ENCODE measurements at regions of chr5 and their contacts with region 1.

Region 1: DNA sequence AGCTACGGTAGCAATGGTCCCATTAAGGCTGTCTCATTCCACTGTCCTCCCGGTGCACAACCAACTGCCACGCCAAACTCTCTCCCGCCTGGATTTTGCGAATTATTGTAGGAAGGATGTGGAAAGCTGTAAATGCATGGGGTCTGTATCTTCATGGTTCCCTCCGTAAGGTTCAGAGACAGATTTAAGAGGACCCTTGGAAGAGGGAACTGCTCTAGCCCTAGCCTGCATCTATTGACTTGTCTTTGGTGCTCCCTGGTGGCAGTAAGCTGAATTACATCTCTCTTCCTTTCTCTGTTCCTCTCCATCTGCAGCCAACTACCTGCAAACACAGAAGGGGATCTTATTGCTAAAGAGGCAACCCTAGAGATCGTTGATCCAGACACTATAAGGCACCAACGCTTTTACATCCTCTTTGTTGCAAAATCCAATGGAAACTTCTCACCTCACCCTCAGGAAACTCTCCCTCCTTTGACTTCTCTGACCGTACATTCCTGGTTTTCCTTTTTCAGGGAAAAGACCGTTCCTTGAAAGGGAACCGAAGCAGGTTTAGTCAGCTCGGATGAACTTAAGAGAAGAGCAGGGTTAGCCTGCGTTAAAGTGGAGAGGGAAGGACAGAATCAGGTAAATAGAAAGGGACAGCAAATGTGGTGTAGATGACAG is 11.9 kb downstream of the CAPSL start:
- DNase-seq: peak in 1 of 2 experiments; percentile 69
- H3K4me3 ChIP-seq: no peak overlapping the region
- H3K4me3 Mint-ChIP-seq: no peak overlapping the region
- H3K27ac Mint-ChIP-seq: no peak overlapping the region
- H3K4me1 ChIP-seq: no peaks in the 10 kb centered on the region; the same call in 1 of the 2 replicates
- H3K4me1 Mint-ChIP-seq: peaks cover 7% of the 10 kb centered on the region
- H3K27me3 ChIP-seq: peaks cover 2% of the 10 kb centered on the region; the same call in 1 of the 2 replicates
- H3K27me3 Mint-ChIP-seq: peaks cover 22% of the 10 kb centered on the region
- CTCF ChIP-seq: peak; percentile 78 to 89

Region 2: GRCh38 chr5:35617435-35618303 is 308.9 kb before region 1 on chr5 and contains the start of gene SPEF2:
- CTCF ChIA-PET with region 1: no interaction called
- POLR2A ChIA-PET with region 1: no interaction called
- intact Hi-C with region 1: loop called (anchors 1 kb)
- DNase-seq: peak; percentile 85 to 89
- H3K4me3 ChIP-seq: peak within 1 kb of the TSS; percentile 66
- H3K4me3 Mint-ChIP-seq: peak within 1 kb of the TSS; percentile 82
- H3K27ac Mint-ChIP-seq: peak within 1 kb of the TSS; percentile 74
- H3K4me1 ChIP-seq: no peaks in the 10 kb centered on the region
- H3K4me1 Mint-ChIP-seq: no peaks in the 10 kb centered on the region
- H3K27me3 ChIP-seq: no peaks in the 10 kb centered on the region
- H3K27me3 Mint-ChIP-seq: peaks cover 3% of the 10 kb centered on the region
- CTCF ChIP-seq: peak; percentile 86 to 91
- total RNA-seq, gene SPEF2: 2.1 and 4.0 TPM in 2 replicates

Region 3: DNA sequence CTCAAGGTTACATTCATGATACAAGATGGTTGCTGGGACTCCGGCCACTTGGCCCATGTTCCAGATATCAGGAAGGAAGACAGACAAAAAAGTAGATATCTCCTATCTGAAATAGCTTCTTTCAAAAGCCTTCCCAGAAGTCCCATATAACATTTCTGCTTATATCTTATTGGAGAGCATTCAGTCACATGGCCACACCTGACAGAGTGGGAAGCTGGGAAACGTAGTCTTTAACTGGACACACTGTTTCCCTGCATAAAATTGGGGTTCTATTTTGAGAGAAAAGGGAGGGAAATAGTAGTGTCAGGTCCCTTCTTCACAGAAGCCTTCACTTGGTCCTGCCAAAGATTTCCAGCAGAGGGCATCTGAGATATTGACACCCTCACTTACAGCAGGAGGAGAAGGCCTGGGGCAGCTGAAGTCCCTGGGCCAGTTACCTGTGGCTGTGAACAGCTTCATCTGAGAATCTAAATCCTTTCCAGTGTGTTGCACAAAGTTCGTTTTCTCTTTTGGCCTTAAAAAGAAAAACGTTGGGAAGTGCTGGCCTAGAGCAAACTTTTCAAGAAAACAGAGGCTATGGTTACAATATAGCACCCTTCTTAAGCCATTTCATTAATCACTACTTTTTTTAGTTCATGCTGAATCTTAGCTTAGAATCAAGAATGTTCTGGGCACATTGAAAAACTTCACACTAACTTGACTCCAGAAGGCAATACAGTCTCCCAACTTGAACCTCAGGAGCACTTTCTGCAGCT is 275.3 kb before region 1 on chr5:
- CTCF ChIA-PET with region 1: interaction called, 26 read pairs
- POLR2A ChIA-PET with region 1: no interaction called
- intact Hi-C with region 1: loop called (anchors 1 kb)
- DNase-seq: peak; percentile 45 to 49
- H3K4me3 ChIP-seq: no peak overlapping the region
- H3K4me3 Mint-ChIP-seq: no peak overlapping the region
- H3K27ac Mint-ChIP-seq: no peak overlapping the region
- H3K4me1 ChIP-seq: no peaks in the 10 kb centered on the region
- H3K4me1 Mint-ChIP-seq: no peaks in the 10 kb centered on the region
- H3K27me3 ChIP-seq: no peaks in the 10 kb centered on the region
- H3K27me3 Mint-ChIP-seq: peaks cover 3% of the 10 kb centered on the region
- CTCF ChIP-seq: peak; percentile 39 to 71

Region 4: GRCh38 chr5:35777358-35778087 is 149.0 kb before region 1 on chr5:
- CTCF ChIA-PET with region 1: interaction called, 4 read pairs
- POLR2A ChIA-PET with region 1: no interaction called
- intact Hi-C with region 1: loop called (anchors 1 kb)
- DNase-seq: peak; percentile 67 to 70
- H3K4me3 ChIP-seq: no peak overlapping the region
- H3K4me3 Mint-ChIP-seq: no peak overlapping the region
- H3K27ac Mint-ChIP-seq: no peak overlapping the region
- H3K4me1 ChIP-seq: no peaks in the 10 kb centered on the region
- H3K4me1 Mint-ChIP-seq: no peaks in the 10 kb centered on the region
- H3K27me3 ChIP-seq: no peaks in the 10 kb centered on the region; the same call in none of the 2 replicates
- H3K27me3 Mint-ChIP-seq: peaks cover 6% of the 10 kb centered on the region
- CTCF ChIP-seq: peak; percentile 56 to 69

Region 5: DNA sequence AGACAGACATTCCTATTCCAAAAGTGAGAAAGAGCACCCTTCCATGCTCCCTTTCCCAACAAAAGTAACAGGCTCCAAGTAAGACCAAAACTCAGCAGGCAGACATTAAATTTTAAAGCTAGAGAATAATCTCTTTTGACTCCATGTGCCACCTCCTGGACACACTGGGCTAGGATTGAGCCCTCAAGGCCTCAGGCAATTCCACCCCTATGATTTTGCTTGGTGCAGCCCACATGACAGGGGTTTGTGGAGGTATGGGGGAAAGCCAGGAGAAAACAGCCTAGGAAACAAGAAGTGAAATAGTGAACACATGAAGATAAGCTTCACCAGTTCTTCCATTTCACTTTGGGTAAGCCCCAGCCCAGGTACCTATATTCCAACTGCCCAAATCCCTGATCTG is 16.6 kb after region 1 on chr5:
- CTCF ChIA-PET with region 1: no interaction called
- POLR2A ChIA-PET with region 1: no interaction called
- intact Hi-C with region 1: no loop called
- DNase-seq: no peak
- H3K4me3 ChIP-seq: no peak overlapping the region
- H3K4me3 Mint-ChIP-seq: no peak overlapping the region
- H3K27ac Mint-ChIP-seq: no peak overlapping the region
- H3K4me1 ChIP-seq: no peaks in the 10 kb centered on the region
- H3K4me1 Mint-ChIP-seq: no peaks in the 10 kb centered on the region
- H3K27me3 ChIP-seq: no peaks in the 10 kb centered on the region
- H3K27me3 Mint-ChIP-seq: peaks cover 9% of the 10 kb centered on the region
- CTCF ChIP-seq: no peak

Region 6: DNA sequence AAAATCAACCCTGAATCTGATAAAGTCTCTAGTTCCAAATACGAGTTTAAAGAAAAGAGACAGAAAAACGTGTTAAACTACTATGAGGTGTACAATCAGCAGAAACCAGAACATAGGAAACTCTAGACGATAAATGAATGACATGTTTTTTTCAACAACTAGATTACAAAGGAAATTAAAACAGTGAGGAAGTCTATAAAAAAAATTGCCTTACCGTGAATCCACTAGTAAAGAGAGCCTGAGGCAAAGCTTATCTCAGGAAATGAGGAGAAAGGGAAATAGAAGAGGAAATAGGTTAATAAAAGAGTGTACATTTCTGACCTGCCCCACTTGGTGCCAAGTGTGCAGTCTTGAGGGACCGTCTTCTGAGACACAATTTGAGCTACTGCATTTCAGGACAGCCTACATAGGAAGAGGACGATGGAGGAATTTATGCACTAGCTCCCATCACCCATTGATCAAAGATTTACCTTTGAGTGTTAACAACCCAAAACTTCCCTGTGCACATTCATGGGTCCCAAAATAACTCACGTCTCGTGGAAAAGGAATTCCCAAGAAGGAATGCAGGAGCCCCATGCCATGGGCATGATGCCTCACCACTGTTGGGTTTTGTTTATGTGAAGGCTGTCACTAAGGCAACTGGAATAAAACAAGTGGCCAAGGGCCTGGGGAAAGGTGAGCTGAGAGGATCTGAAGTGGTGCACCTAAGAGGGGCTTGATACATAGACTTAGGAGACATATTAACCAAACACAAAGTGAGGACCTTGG is 626.3 kb after region 1 on chr5:
- CTCF ChIA-PET with region 1: no interaction called
- POLR2A ChIA-PET with region 1: no interaction called
- intact Hi-C with region 1: no loop called
- DNase-seq: peak in 1 of 2 experiments; percentile 22
- H3K4me3 ChIP-seq: no peak overlapping the region
- H3K4me3 Mint-ChIP-seq: no peak overlapping the region
- H3K27ac Mint-ChIP-seq: peak overlapping the region; percentile 22
- H3K4me1 ChIP-seq: no peaks in the 10 kb centered on the region
- H3K4me1 Mint-ChIP-seq: no peaks in the 10 kb centered on the region
- H3K27me3 ChIP-seq: no peaks in the 10 kb centered on the region
- H3K27me3 Mint-ChIP-seq: no peaks in the 10 kb centered on the region
- CTCF ChIP-seq: no peak

Measured in Caco-2 (cell line).